CD8-positive, alpha-beta memory T cell (primary cell): ENCODE measurements at regions of chr22 and their contacts with region 1.

Region 1: DNA sequence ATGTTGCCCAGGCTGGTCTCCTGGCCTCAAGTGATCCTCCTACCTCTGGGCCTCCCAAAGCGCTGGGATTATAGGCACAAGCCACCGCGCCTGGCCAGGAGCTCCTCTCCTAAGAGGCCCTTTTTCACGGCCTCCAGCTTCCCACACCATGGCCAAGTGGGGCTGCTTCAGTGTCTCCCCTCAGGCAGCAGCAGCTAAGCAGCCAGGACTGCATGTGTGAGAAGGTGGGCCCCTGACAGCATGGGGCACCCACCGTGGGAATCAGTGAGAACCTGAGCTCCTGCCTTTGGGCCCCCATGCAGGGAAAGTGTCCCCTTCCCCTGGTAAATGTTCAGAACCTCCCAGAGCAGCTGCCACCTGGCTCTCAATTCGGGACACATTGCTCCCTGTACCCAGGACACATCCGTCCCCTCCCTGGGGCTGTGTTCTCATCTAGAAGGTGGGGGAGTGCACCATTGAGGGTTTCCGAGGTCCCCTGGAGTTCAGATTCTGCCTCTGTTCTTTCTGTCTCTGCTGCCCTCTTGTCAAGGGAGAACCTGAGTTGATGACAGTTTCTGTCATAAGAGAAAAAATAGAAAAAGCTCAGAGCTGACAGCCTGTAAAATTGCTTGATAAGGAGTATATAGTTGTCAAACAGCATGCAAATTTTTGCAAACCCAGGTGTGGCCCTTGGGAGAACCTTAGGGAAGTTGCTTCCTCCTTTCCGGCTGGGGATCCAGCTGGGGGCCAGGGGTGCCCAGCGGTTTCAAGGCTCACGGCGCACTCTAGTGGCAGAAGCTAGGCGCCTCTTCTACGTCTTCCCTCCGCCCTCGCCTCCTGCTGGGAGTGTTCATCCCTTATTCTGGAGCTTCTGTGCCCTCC is 29.7 kb downstream of the FAM83F start:
- DNase-seq: peak; percentile 36 to 73 (median 47)
- H3K4me3 ChIP-seq: no peak overlapping the region
- H3K4me3 Mint-ChIP-seq: no peak overlapping the region
- H3K27ac ChIP-seq: no peak overlapping the region
- H3K27ac Mint-ChIP-seq: no peak overlapping the region
- H3K4me1 ChIP-seq: peaks cover 6% of the 10 kb centered on the region
- H3K4me1 Mint-ChIP-seq: peaks cover 0 to 4% (median 4%) of the 10 kb centered on the region in 3 donors
- H3K27me3 ChIP-seq: no peaks in the 10 kb centered on the region
- H3K27me3 Mint-ChIP-seq: no peaks in the 10 kb centered on the region

Region 2: DNA sequence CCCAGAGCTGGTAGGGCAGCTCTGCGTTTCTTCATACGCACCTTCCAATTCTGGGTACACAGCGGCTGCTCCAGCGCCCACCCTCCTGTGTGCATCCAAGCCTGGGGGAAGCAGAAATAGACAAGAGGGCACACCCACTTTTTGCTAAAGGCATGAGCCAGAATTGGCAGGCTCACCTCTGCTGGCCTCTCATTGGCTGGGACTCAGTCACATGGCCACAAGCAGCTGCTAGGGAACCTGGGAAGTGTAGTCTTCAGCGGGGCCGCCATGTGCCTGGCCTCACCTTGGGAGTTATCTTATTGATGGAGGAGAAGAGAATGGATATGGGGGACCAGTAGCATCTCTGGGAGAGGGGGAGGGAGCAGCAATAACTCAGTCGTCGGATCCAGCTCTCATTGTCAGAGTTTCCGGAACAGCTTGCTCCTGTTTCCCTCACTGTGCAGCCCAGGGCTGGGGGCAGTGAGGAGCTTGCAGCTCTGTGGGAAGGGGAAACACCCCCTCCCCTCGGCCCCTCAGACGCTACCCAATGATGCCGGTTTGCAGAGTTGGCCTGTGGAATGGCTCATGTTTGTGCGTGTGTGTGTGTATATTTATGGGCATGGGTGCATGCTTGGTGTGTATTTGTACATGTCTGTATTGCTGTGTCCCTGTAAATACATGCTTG is 534.2 kb before region 1 on chr22:
- CTCF ChIA-PET with region 1: interaction called, 11 read pairs
- POLR2A ChIA-PET with region 1: no interaction called
- DNase-seq: peak; percentile 62 to 82 (median 67)
- H3K4me3 ChIP-seq: no peak overlapping the region
- H3K4me3 Mint-ChIP-seq: no peak overlapping the region
- H3K27ac ChIP-seq: no peak overlapping the region
- H3K27ac Mint-ChIP-seq: no peak overlapping the region
- H3K4me1 ChIP-seq: peaks cover 10% of the 10 kb centered on the region
- H3K4me1 Mint-ChIP-seq: peaks cover 4 to 7% (median 6%) of the 10 kb centered on the region in 3 donors
- H3K27me3 ChIP-seq: no peaks in the 10 kb centered on the region
- H3K27me3 Mint-ChIP-seq: peaks cover 0 to 4% of the 10 kb centered on the region in 2 donors

Region 3: DNA sequence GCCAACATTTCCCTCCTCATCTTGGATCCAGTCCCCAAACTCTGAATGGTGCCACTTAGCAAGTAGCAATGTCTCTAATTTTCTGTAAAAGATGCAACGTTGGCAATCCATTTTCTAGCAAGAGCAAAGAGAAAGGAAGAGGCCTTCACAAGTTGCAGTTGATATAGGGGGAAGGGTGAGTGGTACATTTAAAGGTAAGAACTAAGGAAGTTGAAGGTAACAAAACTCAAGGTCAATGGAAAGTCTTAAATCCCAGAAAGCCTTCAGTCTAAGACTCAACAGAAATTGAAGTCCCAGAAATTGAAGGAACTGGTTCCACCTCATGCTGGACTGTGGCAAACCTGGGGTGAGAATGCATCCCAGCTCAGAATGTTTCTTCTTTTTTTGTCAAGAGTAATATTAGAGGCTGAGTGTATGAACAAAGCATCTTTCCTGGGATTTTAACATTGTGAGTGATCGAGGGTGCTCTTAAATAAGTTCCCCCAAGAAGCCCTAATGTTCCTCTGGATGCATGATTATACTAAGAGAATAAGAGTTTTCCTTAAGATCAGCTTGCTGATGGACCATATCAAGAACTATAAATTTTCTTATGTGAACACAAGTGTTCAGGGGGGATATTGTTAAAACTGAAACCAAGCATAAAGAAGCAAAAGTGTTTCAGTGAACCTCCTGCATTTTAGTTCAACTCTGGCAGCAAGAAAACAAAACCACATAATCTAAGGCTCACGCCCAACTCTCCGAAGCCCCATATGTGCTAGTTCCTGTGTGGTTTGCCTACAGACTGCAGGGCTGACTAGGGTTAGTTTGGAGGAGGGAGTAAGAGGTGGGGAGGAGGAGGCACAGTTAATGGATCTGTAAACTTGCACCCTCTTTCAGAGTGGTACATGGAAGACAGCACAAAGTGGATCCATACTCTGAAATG is 123.9 kb before region 1 on chr22 and contains the start of gene GRAP2:
- CTCF ChIA-PET with region 1: interaction called, 54 read pairs
- POLR2A ChIA-PET with region 1: no interaction called
- DNase-seq: peak; percentile 47 to 88 (median 87)
- H3K4me3 ChIP-seq: peak within 1 kb of the TSS; percentile 71
- H3K4me3 Mint-ChIP-seq: peak within 1 kb of the TSS; percentile 91 to 99 (median 97)
- H3K27ac ChIP-seq: peak within 1 kb of the TSS; percentile 32
- H3K27ac Mint-ChIP-seq: peak within 1 kb of the TSS in 7 of 8 donors; percentile 93 to 99 (median 96)
- H3K4me1 ChIP-seq: peaks cover 34% of the 10 kb centered on the region
- H3K4me1 Mint-ChIP-seq: peaks cover 21 to 24% (median 23%) of the 10 kb centered on the region in 3 donors
- H3K27me3 ChIP-seq: no peaks in the 10 kb centered on the region
- H3K27me3 Mint-ChIP-seq: no peaks in the 10 kb centered on the region
- total RNA-seq, gene GRAP2: 41.8 to 53.2 TPM

Region 4: GRCh38 chr22:39932918-39933649 is 91.3 kb before region 1 on chr22:
- CTCF ChIA-PET with region 1: interaction called, 15 read pairs
- POLR2A ChIA-PET with region 1: no interaction called
- DNase-seq: peak; percentile 46 to 76 (median 67)
- H3K4me3 ChIP-seq: peak overlapping the region; percentile 30
- H3K4me3 Mint-ChIP-seq: peak overlapping the region in 6 of 7 donors; percentile 74 to 85 (median 81)
- H3K27ac ChIP-seq: no peak overlapping the region
- H3K27ac Mint-ChIP-seq: peak overlapping the region in 7 of 8 donors; percentile 76 to 98 (median 92)
- H3K4me1 ChIP-seq: peaks cover 98% of the 10 kb centered on the region
- H3K4me1 Mint-ChIP-seq: peaks cover 55% of the 10 kb centered on the region in 3 donors
- H3K27me3 ChIP-seq: no peaks in the 10 kb centered on the region
- H3K27me3 Mint-ChIP-seq: no peaks in the 10 kb centered on the region

Region 5: GRCh38 chr22:40009292-40009769 is 15.1 kb before region 1 on chr22:
- CTCF ChIA-PET with region 1: interaction called, 21 read pairs
- POLR2A ChIA-PET with region 1: no interaction called
- DNase-seq: no peak
- H3K4me3 ChIP-seq: no peak overlapping the region
- H3K4me3 Mint-ChIP-seq: peak overlapping the region in 1 of 7 donors; percentile 37
- H3K27ac ChIP-seq: no peak overlapping the region
- H3K27ac Mint-ChIP-seq: peak overlapping the region in 1 of 8 donors; percentile 5
- H3K4me1 ChIP-seq: peaks cover 6% of the 10 kb centered on the region
- H3K4me1 Mint-ChIP-seq: peaks cover 0 to 12% (median 4%) of the 10 kb centered on the region in 3 donors
- H3K27me3 ChIP-seq: no peaks in the 10 kb centered on the region
- H3K27me3 Mint-ChIP-seq: peaks cover 18 to 51% of the 10 kb centered on the region in 2 donors

Region 6: GRCh38 chr22:40036591-40037225 is 12.3 kb after region 1 on chr22:
- CTCF ChIA-PET with region 1: interaction called, 14 read pairs
- POLR2A ChIA-PET with region 1: interaction called, 4 read pairs
- DNase-seq: peak in 4 of 5 donors; percentile 18 to 66 (median 29)
- H3K4me3 ChIP-seq: no peak overlapping the region
- H3K4me3 Mint-ChIP-seq: no peak overlapping the region
- H3K27ac ChIP-seq: no peak overlapping the region
- H3K27ac Mint-ChIP-seq: no peak overlapping the region
- H3K4me1 ChIP-seq: no peaks in the 10 kb centered on the region
- H3K4me1 Mint-ChIP-seq: no peaks in the 10 kb centered on the region
- H3K27me3 ChIP-seq: peaks cover 5% of the 10 kb centered on the region
- H3K27me3 Mint-ChIP-seq: peaks cover 20 to 32% of the 10 kb centered on the region in 2 donors

Region 7: DNA sequence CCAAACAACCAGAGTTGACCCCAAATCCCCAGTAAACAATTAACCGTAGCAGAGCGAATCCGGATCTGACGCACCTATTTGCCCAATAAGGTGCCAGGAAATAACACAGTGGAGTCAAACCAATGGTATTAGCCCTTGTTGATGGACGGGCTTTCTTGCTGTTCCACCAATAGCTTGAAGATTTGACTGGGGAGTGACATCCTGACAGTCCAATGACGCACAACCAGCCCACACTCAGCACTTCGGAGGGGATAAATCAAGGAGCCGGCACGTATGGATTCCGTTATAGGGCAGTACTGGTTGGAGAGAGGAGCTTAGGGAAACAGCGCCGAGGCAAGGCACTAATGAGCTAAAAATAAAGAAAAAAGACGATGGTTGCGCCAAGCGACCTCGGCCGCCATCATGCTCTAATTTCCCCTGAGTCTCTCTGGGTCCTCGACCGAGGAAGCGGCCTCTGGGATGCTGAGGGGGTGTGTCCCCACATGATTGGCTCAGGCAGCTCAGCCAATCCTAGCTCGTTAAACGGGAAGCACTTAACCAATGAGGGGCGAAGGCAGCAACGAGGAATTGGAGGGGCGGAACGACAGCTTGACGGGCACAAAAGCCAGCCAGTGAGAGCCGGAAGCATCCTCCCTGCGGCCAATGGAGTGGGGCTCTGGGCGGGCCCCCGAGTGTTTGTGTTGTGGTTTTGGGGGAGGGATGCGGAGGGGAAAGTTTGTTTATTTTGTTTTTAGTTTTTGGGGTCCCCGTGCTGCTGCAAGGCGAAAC is 19.9 kb after region 1 on chr22:
- CTCF ChIA-PET with region 1: interaction called, 13 read pairs
- POLR2A ChIA-PET with region 1: interaction called, 4 read pairs
- DNase-seq: peak; percentile 95 to 99 (median 99)
- H3K4me3 ChIP-seq: peak overlapping the region; percentile 83
- H3K4me3 Mint-ChIP-seq: peak overlapping the region; percentile 91 to 99 (median 97)
- H3K27ac ChIP-seq: peak overlapping the region; percentile 97
- H3K27ac Mint-ChIP-seq: peak overlapping the region; percentile 98 to 100 (median 100)
- H3K4me1 ChIP-seq: peaks cover 41% of the 10 kb centered on the region
- H3K4me1 Mint-ChIP-seq: peaks cover 35 to 47% (median 47%) of the 10 kb centered on the region in 3 donors
- H3K27me3 ChIP-seq: no peaks in the 10 kb centered on the region
- H3K27me3 Mint-ChIP-seq: peaks cover 6 to 8% of the 10 kb centered on the region in 2 donors